ENCODE measurements at regions of chr1 and their contacts with region 1.

Region 1: DNA sequence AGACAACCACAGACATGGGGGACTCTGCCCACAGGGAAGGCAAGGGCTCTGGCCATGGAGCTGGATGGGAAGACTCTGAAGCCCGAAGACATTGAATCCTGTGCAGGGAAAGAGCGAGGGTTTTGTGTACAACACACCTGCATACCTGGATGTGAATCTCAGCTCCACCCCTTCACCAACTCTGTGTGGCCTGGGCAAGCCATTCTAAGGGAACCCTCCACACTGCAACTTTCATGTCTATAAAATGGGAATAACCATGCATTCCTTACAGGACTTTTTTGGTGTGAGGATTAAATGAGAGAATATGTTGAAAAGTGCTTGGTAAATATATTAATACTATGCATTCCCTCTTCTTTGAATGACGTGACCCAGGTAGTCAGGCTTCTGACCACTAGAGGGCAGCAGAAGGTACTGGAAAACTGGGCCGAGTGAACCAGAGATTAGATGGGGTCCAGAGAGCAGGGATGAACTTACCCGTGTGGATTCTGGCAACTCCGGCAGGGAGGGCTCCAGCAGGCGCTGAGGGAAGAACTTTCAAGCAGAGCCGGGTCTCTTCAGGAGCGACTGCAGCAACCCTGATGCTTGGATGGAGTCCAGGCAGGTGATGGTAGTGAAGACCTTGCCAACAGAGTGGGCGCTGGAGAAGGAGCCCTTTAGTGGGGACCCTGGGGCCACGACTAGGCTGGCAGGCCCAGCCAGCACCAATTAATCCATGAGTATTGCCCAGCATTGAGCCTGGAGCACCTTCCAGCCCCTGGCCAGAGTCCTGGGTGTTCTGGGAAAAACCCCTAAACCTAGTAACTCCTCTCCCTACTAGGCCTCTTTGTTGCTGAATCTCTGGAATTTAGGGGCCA is 834 bp upstream of the ELF3 start:
- DNase-seq: peak; percentile 73
- ATAC-seq: peak; percentile 83
- H3K4me3 Mint-ChIP-seq: no peak overlapping the region
- H3K27ac Mint-ChIP-seq: no peak overlapping the region
- H3K4me1 Mint-ChIP-seq: peaks cover 2% of the 10 kb centered on the region
- H3K27me3 Mint-ChIP-seq: no peaks in the 10 kb centered on the region
- CTCF ChIP-seq: peak; percentile 95

Region 2: DNA sequence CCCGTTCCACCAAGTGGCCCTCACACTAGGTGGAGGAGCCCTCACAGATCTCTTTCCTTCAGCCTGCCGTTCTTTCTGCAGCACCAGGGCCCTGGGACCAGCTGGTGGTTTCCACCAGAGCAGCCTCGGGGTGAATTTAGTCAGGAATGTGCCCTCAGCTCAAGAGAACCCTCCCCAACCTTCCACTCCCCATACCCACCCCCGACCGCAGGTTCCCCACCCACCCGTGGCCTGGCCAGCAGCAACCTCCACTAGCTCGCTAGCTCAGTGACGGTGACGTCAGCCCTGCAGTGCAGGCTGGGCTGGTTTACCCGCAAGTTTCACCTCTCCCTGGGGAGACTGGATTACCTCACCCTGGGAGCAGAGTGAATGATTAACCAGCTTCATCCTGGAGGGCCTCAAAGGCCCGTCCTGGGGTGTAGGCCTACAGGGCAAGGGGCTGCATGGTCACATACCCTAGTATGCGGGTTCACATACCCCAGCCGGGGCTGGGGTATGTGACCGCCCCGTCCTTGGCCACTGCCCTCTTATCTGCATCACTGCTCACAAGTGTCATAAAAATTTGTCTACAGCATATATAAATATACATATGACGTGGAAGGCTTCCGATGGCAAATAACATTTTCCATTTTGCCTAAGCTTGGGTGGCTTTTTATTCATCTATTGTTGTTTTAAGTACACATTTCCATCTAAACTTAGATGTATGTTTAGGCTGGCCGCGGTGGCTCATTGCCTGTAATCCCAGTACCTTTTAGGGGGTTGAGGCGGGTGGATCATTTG is 25.3 kb after region 1 on chr1:
- CTCF ChIA-PET with region 1: no interaction called
- POLR2A ChIA-PET with region 1: no interaction called
- intact Hi-C with region 1: no loop called
- DNase-seq: no peak
- ATAC-seq: no peak
- H3K4me3 Mint-ChIP-seq: no peak overlapping the region
- H3K27ac Mint-ChIP-seq: no peak overlapping the region
- H3K4me1 Mint-ChIP-seq: no peaks in the 10 kb centered on the region
- H3K27me3 Mint-ChIP-seq: peaks cover 2% of the 10 kb centered on the region
- CTCF ChIP-seq: no peak

Region 3: DNA sequence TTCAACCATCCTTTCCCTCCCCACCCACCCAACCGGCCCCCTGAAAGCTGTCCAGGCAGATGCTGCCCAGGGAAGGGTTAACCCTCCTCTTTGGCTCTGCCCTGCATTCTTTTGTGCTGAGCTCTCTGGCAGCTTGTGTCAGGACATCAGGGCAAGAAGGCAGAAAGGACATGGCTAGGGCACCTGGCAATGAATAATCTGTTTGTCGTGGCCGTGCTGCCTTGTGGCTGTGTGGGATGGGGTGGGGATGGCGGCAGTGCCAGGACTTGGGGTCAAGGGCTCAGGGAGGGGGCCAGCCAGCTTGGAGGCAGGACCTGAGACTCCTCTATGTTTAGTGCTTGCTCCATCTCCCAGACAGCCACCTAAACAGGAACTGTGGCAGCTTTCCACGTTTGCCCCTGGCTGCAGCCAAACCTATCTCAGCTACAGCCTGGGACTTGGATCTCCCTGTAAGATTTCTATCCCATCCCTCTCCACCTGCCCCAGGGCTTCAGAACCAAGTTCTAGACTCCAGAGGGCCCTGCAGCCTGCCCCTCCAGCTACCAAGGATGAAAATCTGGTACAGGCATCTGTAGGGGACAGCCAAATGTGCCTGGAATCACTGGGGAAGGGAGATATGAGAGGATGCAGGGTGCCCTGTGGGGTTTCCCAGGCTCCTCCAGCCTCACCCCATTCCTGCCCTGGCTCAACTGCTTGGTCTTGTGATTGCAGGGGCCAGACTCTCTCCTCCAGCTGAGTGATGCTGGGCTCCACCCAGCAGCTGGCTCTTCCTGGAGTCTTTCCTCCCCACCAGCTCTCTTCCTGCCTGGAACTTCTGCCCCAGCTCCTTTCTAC is 103.5 kb after region 1 on chr1:
- CTCF ChIA-PET with region 1: interaction called, 10 read pairs
- POLR2A ChIA-PET with region 1: no interaction called
- intact Hi-C with region 1: no loop called
- DNase-seq: no peak
- ATAC-seq: no peak
- H3K4me3 Mint-ChIP-seq: no peak overlapping the region
- H3K27ac Mint-ChIP-seq: no peak overlapping the region
- H3K4me1 Mint-ChIP-seq: peaks cover 2% of the 10 kb centered on the region
- H3K27me3 Mint-ChIP-seq: no peaks in the 10 kb centered on the region
- CTCF ChIP-seq: no peak

Region 4: DNA sequence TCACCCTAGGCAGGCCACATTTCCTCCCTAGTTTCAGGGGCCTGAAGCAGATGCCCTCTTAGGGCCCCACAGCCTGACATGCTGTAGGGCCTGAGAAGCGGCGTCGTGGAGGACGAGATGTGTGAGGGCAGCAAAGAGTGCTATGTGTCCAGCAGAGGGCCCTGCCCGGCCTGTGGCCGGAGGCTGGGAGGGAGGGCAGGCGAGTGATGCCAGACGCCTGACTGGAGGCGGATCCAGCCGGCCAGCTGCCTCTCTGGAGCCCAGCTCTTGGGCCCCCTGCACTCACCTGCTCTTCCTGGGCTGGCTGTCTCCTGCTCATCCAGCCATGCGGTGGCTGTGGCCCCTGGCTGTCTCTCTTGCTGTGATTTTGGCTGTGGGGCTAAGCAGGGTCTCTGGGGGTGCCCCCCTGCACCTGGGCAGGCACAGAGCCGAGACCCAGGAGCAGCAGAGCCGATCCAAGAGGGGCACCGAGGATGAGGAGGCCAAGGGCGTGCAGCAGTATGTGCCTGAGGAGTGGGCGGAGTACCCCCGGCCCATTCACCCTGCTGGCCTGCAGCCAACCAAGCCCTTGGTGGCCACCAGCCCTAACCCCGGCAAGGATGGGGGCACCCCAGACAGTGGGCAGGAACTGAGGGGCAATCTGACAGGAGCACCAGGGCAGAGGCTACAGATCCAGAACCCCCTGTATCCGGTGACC is 113.2 kb after region 1 on chr1 and contains the start of gene GPR37L1:
- CTCF ChIA-PET with region 1: interaction called, 10 read pairs
- POLR2A ChIA-PET with region 1: no interaction called
- intact Hi-C with region 1: loop called (anchors 5 kb)
- DNase-seq: no peak
- ATAC-seq: no peak
- H3K4me3 Mint-ChIP-seq: no peak within 1 kb of the TSS
- H3K27ac Mint-ChIP-seq: no peak within 1 kb of the TSS
- H3K4me1 Mint-ChIP-seq: no peaks in the 10 kb centered on the region
- H3K27me3 Mint-ChIP-seq: peaks cover 5% of the 10 kb centered on the region
- CTCF ChIP-seq: no peak
- total RNA-seq, gene GPR37L1: not detected

Region 5: GRCh38 chr1:202135221-202135721 is 125.7 kb after region 1 on chr1:
- CTCF ChIA-PET with region 1: interaction called, 46 read pairs
- POLR2A ChIA-PET with region 1: no interaction called
- intact Hi-C with region 1: loop called (anchors 5 kb)
- DNase-seq: peak; percentile 60
- ATAC-seq: peak; percentile 96
- H3K4me3 Mint-ChIP-seq: no peak overlapping the region
- H3K27ac Mint-ChIP-seq: no peak overlapping the region
- H3K4me1 Mint-ChIP-seq: no peaks in the 10 kb centered on the region
- H3K27me3 Mint-ChIP-seq: no peaks in the 10 kb centered on the region
- CTCF ChIP-seq: peak; percentile 90